ENCODE measurements at regions of chr16 and their contacts with region 1.

Region 1: DNA sequence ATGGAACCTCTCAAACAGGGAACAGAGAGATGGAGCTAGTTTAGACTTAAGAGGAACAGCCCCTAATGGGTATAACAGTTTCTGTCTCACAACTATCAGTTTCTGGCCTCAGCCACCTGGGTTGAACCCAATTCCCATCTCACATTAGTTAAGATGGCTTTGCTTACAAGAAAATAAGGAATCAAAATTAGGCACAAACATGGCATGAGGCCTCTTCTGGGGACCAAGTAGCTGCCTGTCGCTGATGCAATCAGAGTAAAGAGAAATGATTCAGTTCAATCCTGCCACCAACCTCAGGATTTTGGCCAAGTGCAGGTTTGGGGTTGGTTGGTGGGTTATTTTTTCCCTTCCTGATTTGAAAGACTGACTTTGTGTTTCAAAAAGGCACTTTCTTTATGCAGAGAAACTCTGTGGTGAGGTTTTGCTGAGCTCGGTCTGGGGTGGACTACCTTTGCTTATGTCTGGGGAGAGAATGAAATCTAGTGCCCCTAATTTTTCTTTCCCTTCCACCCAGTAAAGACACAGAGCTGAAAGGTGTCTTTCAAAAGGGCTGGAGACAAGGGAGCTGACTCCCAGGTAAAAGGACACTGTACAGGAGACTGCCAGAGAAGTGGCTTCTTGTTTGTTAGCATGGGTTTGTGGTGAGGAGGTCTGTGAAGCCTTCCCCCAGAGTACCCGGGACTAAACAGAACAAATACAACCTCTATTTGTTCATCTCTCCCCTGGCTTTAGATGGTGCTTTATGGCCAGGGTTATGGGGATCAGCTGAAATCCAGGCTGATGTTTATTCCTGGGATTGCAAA is 44.8 kb upstream of the NFAT5 start:
- DNase-seq: peak; percentile 41
- ATAC-seq: peak; percentile 88
- H3K4me3 Mint-ChIP-seq: peak overlapping the region; percentile 48
- H3K27ac Mint-ChIP-seq: peak overlapping the region; percentile 81
- H3K4me1 Mint-ChIP-seq: peaks cover 26% of the 10 kb centered on the region
- H3K27me3 Mint-ChIP-seq: no peaks in the 10 kb centered on the region

Region 2: GRCh38 chr16:69563605-69564580 is 42.9 kb after region 1 on chr16:
- POLR2A ChIA-PET with region 1: interaction called, 11 read pairs
- DNase-seq: no peak
- ATAC-seq: peak; percentile 43
- H3K4me3 Mint-ChIP-seq: peak overlapping the region; percentile 93
- H3K27ac Mint-ChIP-seq: peak overlapping the region; percentile 97
- H3K4me1 Mint-ChIP-seq: peaks cover 33% of the 10 kb centered on the region
- H3K27me3 Mint-ChIP-seq: peaks cover 2% of the 10 kb centered on the region